GM12878 (cell line): ENCODE measurements at regions of chr3 and their contacts with region 1.

Region 1: DNA sequence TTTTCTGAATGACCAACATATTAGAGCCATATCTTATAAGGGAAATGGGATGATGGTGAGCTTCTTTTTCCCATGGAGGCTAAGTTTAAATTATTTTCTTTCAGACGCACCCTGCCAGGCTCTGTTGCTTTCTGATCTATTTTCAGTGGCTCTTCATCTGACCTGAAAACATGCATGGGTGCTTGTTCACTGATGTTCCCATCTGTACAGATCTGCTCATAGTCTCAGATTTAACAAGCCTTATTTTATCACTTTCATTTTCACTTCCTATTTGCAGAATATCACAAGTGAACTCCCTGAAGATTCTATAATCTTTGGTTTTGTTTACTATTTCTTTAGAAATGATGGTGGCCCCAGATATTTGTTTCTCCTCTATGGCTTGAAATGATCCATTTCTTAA is 31.1 kb upstream of the SUCLG2 start:
- DNase-seq: peak; percentile 66
- ATAC-seq: peak; percentile 100
- H3K4me3 ChIP-seq: peak overlapping the region; percentile 28; the same call in 1 of the 2 replicates
- H3K27ac ChIP-seq: peak overlapping the region; percentile 72
- H3K4me1 ChIP-seq: peaks cover 19% of the 10 kb centered on the region
- H3K27me3 ChIP-seq: no peaks in the 10 kb centered on the region
- CTCF ChIP-seq: no peak
- EP300 ChIP-seq: no peak
- POLR2A ChIP-seq: no peak
- RAD21 ChIP-seq: no peak

Region 2: DNA sequence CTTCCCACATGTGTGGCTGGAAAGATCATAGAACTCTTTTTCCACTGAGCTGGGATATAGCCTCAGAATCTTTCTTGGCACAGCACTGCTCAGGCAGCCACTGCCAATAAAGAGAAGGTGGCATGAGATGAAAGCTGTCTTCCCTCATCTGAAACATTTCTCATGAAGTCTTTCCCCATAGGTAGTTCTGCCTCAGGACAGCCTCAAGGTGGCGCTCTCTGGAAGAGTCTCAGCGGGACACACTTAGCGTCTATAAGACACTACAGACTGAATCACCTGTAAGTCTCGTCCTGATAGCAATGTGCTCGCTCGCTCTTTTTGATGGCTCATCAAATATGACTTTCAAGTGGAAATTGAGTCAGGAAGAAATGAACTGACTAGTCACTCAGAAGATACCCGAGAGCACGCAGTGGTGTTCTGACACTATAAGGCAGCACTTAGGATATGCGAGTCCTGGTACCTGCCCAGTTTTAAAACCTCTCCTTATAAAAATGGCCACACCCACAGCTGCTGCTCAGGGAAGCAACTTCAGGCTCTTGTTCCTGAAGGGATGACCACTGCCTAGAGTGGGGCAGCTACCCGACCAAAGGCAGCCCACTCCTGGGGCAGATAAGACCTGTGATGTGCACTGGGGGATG is 300.6 kb before region 1 on chr3:
- CTCF ChIA-PET with region 1: interaction called, 5 read pairs
- POLR2A ChIA-PET with region 1: no interaction called
- RAD21 ChIA-PET with region 1: no interaction called
- SMC1A ChIA-PET with region 1: no interaction called
- in situ Hi-C with region 1: no loop called
- intact Hi-C with region 1: loop called (anchors 10 kb)
- DNase-seq: no peak
- ATAC-seq: peak; percentile 68
- H3K4me3 ChIP-seq: no peak overlapping the region
- H3K27ac ChIP-seq: no peak overlapping the region
- H3K4me1 ChIP-seq: peaks cover 6% of the 10 kb centered on the region; the same call in 1 of the 2 replicates
- H3K27me3 ChIP-seq: no peaks in the 10 kb centered on the region
- CTCF ChIP-seq: peak; percentile 39 to 61 (median 42)
- EP300 ChIP-seq: no peak
- POLR2A ChIP-seq: no peak
- RAD21 ChIP-seq: peak; percentile 63

Region 3: GRCh38 chr3:67526246-67526645 is 159.3 kb before region 1 on chr3:
- CTCF ChIA-PET with region 1: no interaction called
- POLR2A ChIA-PET with region 1: no interaction called
- RAD21 ChIA-PET with region 1: no interaction called
- SMC1A ChIA-PET with region 1: no interaction called
- in situ Hi-C with region 1: no loop called
- intact Hi-C with region 1: no loop called
- DNase-seq: no peak
- ATAC-seq: no peak
- H3K4me3 ChIP-seq: no peak overlapping the region
- H3K27ac ChIP-seq: no peak overlapping the region
- H3K4me1 ChIP-seq: no peaks in the 10 kb centered on the region
- H3K27me3 ChIP-seq: no peaks in the 10 kb centered on the region
- CTCF ChIP-seq: no peak
- EP300 ChIP-seq: no peak
- POLR2A ChIP-seq: no peak
- RAD21 ChIP-seq: no peak

Region 4: DNA sequence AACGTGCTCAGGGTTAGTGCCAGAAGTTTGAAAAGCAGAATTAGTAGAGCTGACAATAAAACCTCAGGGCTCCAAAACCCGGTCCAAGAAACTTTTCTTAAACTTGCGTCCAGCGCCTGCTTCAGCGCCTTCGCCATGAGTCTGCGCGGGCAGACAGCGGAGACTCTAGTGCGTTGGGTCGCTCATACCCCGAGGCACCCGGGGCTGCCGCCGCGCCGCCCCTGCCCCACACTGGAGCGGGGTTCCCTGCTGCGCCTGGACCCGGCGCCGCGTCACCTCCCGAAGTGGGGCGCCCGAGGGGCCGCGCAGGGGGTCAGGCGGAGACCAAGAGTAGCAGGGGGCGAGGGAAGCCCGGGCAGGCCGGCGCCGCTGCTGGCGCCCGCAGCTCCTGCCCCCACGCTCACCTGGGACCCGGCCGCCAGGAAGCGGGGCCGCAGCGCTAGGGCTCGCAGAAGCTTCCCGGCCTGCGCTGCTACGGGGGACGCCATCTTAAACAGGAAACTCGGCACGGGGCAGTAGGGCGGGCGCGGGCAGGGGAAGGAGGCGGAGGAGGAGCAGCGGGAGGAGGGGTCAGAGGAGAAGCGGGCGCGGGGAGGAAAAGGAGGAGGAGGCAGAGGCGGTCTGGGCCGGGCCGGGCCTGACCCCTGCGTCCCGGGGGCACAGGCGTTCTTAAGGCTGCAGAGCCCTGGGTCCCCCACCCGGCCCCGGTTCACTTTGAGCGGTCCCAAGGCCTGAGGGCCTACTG is 31.2 kb before region 1 on chr3 and contains the start of gene SUCLG2:
- CTCF ChIA-PET with region 1: interaction called, 3 read pairs
- POLR2A ChIA-PET with region 1: interaction called, 3 read pairs
- RAD21 ChIA-PET with region 1: no interaction called
- SMC1A ChIA-PET with region 1: interaction called, 18 read pairs
- in situ Hi-C with region 1: no loop called
- intact Hi-C with region 1: loop called (anchors 1 kb)
- DNase-seq: no peak
- ATAC-seq: peak; percentile 90
- H3K4me3 ChIP-seq: peak within 1 kb of the TSS; percentile 94
- H3K27ac ChIP-seq: peak within 1 kb of the TSS; percentile 94
- H3K4me1 ChIP-seq: peaks cover 37% of the 10 kb centered on the region
- H3K27me3 ChIP-seq: no peaks in the 10 kb centered on the region
- CTCF ChIP-seq: no peak
- EP300 ChIP-seq: no peak
- POLR2A ChIP-seq: peak; percentile 93
- RAD21 ChIP-seq: no peak
- polyA plus RNA-seq, gene SUCLG2: 17.8 to 31.1 TPM